ENCODE measurements at regions of chr5 and their contacts with region 1.

Region 1: GRCh38 chr5:136769900-136770684 is 404.7 kb upstream of the TRPC7 start:
- DNase-seq: peak; percentile 66
- H3K4me3 ChIP-seq: no peak overlapping the region
- H3K27ac ChIP-seq: no peak overlapping the region
- H3K4me1 ChIP-seq: no peaks in the 10 kb centered on the region
- H3K27me3 ChIP-seq: peaks cover 4 to 7% of the 10 kb centered on the region in 2 experiments
- CTCF ChIP-seq: peak; percentile 86 to 87
- POLR2A ChIP-seq: no peak

Region 2: GRCh38 chr5:136249678-136250266 is 520.3 kb before region 1 on chr5:
- CTCF ChIA-PET with region 1: interaction called, 155 read pairs
- POLR2A ChIA-PET with region 1: no interaction called
- dilution Hi-C with region 1: no loop called
- intact Hi-C with region 1: loop called (anchors 1 kb)
- DNase-seq: peak; percentile 64
- H3K4me3 ChIP-seq: no peak overlapping the region
- H3K27ac ChIP-seq: no peak overlapping the region
- H3K4me1 ChIP-seq: no peaks in the 10 kb centered on the region
- H3K27me3 ChIP-seq: peaks cover 5 to 13% of the 10 kb centered on the region in 2 experiments
- CTCF ChIP-seq: peak; percentile 84 to 87
- POLR2A ChIP-seq: no peak

Region 3: GRCh38 chr5:136332223-136333015 is 437.7 kb before region 1 on chr5:
- CTCF ChIA-PET with region 1: no interaction called
- POLR2A ChIA-PET with region 1: no interaction called
- dilution Hi-C with region 1: no loop called
- intact Hi-C with region 1: no loop called
- DNase-seq: no peak
- H3K4me3 ChIP-seq: no peak overlapping the region
- H3K27ac ChIP-seq: no peak overlapping the region
- H3K4me1 ChIP-seq: no peaks in the 10 kb centered on the region
- H3K27me3 ChIP-seq: peaks cover 2% of the 10 kb centered on the region in 2 experiments
- CTCF ChIP-seq: no peak
- POLR2A ChIP-seq: no peak

Region 4: GRCh38 chr5:136350343-136350742 is 419.7 kb before region 1 on chr5:
- CTCF ChIA-PET with region 1: interaction called, 11 read pairs
- POLR2A ChIA-PET with region 1: no interaction called
- dilution Hi-C with region 1: no loop called
- intact Hi-C with region 1: no loop called
- DNase-seq: peak; percentile 48
- H3K4me3 ChIP-seq: no peak overlapping the region
- H3K27ac ChIP-seq: no peak overlapping the region
- H3K4me1 ChIP-seq: peaks cover 14% of the 10 kb centered on the region
- H3K27me3 ChIP-seq: no peaks in the 10 kb centered on the region
- CTCF ChIP-seq: no peak
- POLR2A ChIP-seq: no peak

Region 5: DNA sequence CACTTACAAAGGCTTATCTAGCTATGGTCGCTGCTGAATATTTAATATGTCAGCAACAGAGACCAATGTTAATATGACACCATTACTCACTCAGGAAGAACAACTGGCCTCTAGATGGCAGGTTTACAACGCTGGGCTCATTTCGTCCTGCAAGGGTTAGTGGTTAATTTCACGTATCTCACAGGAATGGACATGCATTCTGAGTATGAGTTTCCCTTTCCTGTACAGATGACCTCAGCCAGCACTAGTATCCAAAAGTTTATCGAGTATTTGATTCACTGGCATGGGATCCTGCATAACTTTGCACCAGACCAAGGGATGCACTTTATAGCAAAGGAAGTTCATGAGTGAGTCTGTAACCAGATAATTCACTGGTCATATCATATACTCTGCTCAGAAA is 396.1 kb before region 1 on chr5:
- CTCF ChIA-PET with region 1: interaction called, 57 read pairs
- POLR2A ChIA-PET with region 1: no interaction called
- dilution Hi-C with region 1: no loop called
- intact Hi-C with region 1: loop called (anchors 1 kb)
- DNase-seq: peak; percentile 72
- H3K4me3 ChIP-seq: no peak overlapping the region
- H3K27ac ChIP-seq: no peak overlapping the region
- H3K4me1 ChIP-seq: peaks cover 3% of the 10 kb centered on the region
- H3K27me3 ChIP-seq: peaks cover 0 to 12% of the 10 kb centered on the region in 2 experiments
- CTCF ChIP-seq: peak; percentile 51 to 58
- POLR2A ChIP-seq: no peak

Region 6: GRCh38 chr5:136563489-136563888 is 206.6 kb before region 1 on chr5:
- CTCF ChIA-PET with region 1: no interaction called
- POLR2A ChIA-PET with region 1: no interaction called
- dilution Hi-C with region 1: no loop called
- intact Hi-C with region 1: no loop called
- DNase-seq: no peak
- H3K4me3 ChIP-seq: no peak overlapping the region
- H3K27ac ChIP-seq: no peak overlapping the region
- H3K4me1 ChIP-seq: no peaks in the 10 kb centered on the region
- H3K27me3 ChIP-seq: peaks cover 0 to 6% of the 10 kb centered on the region in 2 experiments
- CTCF ChIP-seq: no peak
- POLR2A ChIP-seq: no peak

Region 7: DNA sequence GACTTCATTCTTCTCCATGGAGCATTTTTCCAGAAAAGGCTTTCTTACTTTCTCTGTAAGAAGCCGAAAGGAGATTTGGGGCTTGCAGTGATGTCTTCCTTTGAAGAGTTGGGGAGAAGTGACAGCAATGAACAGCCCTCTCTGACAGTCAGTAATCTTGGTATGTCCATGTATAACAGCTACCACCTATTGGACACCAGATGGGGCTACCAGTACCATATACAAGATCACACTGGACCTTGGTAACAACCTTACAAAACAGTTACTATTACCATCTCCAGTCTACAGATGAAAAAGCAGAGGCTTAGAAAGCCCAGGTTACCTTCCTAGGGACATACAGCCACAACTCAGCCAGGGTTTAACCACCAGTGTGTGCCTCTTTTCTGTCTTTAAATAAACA is 132.0 kb before region 1 on chr5:
- CTCF ChIA-PET with region 1: interaction called, 24 read pairs
- POLR2A ChIA-PET with region 1: no interaction called
- dilution Hi-C with region 1: no loop called
- intact Hi-C with region 1: loop called (anchors 5 kb)
- DNase-seq: no peak
- H3K4me3 ChIP-seq: no peak overlapping the region
- H3K27ac ChIP-seq: no peak overlapping the region
- H3K4me1 ChIP-seq: peaks cover 12% of the 10 kb centered on the region
- H3K27me3 ChIP-seq: no peaks in the 10 kb centered on the region
- CTCF ChIP-seq: peak in 1 of 2 donors; percentile 1
- POLR2A ChIP-seq: no peak

Region 8: GRCh38 chr5:136677217-136677616 is 92.9 kb before region 1 on chr5:
- CTCF ChIA-PET with region 1: no interaction called
- POLR2A ChIA-PET with region 1: no interaction called
- dilution Hi-C with region 1: no loop called
- intact Hi-C with region 1: no loop called
- DNase-seq: no peak
- H3K4me3 ChIP-seq: no peak overlapping the region
- H3K27ac ChIP-seq: no peak overlapping the region
- H3K4me1 ChIP-seq: no peaks in the 10 kb centered on the region
- H3K27me3 ChIP-seq: no peaks in the 10 kb centered on the region
- CTCF ChIP-seq: no peak
- POLR2A ChIP-seq: no peak

Region 9: DNA sequence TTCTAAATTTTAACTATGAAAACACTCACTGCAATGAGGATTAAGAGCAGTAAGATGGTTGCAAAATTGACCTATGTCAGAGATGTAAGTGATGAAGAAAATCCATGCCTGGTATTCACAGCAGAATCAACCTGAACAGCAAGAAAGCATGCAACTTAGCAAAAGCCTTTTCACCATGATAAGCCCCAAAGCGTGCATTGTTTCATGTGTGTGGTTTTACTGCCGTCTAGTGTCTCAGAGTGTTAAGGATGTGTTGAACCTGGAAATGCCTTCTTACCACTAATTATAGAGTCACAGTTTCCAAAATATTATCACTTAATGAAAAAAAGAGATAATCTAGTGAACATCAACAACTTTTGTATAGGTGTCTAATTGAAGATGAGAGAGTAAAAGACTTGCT is 10.4 kb after region 1 on chr5:
- CTCF ChIA-PET with region 1: interaction called, 10 read pairs
- POLR2A ChIA-PET with region 1: no interaction called
- dilution Hi-C with region 1: no loop called
- intact Hi-C with region 1: no loop called
- DNase-seq: peak; percentile 5
- H3K4me3 ChIP-seq: no peak overlapping the region
- H3K27ac ChIP-seq: no peak overlapping the region
- H3K4me1 ChIP-seq: no peaks in the 10 kb centered on the region
- H3K27me3 ChIP-seq: peaks cover 7 to 21% of the 10 kb centered on the region in 2 experiments
- CTCF ChIP-seq: no peak
- POLR2A ChIP-seq: no peak

Region 10: GRCh38 chr5:136853971-136854370 is 83.9 kb after region 1 on chr5:
- CTCF ChIA-PET with region 1: no interaction called
- POLR2A ChIA-PET with region 1: no interaction called
- dilution Hi-C with region 1: no loop called
- intact Hi-C with region 1: no loop called
- DNase-seq: no peak
- H3K4me3 ChIP-seq: no peak overlapping the region
- H3K27ac ChIP-seq: no peak overlapping the region
- H3K4me1 ChIP-seq: no peaks in the 10 kb centered on the region
- H3K27me3 ChIP-seq: peaks cover 2 to 10% of the 10 kb centered on the region in 2 experiments
- CTCF ChIP-seq: no peak
- POLR2A ChIP-seq: no peak